ENCODE measurements at regions of chr1 and their contacts with region 1.

Region 1: GRCh38 chr1:29901624-29902325 is 665.5 kb downstream of the PTPRU start:
- DNase-seq: peak; percentile 30

Region 2: DNA sequence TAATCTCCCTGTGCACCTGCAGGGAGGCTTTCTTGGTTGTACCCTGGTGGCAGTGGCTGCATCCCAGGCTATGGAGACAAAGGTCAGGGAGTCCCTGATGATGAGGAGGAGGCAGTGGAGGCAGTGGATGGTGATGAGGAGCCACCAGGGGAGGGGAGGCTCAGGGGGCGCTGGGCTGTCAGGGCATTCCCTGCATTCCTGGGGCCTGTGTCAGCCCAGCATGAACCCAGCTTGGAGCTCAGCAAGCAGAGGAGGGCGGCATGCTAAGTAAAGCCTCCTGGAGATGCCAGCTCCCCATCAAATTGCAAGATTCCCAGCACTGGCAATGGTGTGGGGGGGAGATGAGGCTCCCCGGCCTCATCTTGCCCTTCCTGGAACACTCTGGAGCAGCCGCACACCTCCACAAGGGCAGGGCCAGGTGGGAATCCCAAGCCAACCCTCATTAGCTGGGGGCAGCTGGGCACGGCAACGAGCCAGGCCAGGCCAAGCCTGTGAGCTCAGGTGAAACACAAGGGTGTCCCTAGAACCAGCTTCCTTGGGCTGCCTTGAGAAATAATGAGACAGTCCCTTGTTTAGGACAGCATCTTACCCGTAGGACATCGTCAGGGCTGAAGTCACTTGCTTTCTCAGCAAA is 352.1 kb after region 1 on chr1:
- intact Hi-C with region 1: loop called in 1 of 2 experiments (anchors 10 kb)
- DNase-seq: no peak

Measured in posterior vena cava (tissue), 2 donors.